ENCODE measurements at regions of chr16 and their contacts with region 1.

Region 1: GRCh38 chr16:8674413-8675022 is at the start of gene ABAT:
- DNase-seq: peak; percentile 86

Region 2: GRCh38 chr16:8797364-8798173 is 123.1 kb after region 1 on chr16 and contains the starts of genes PMM2 and TMEM186:
- in situ Hi-C with region 1: loop called (anchors 25 kb)
- DNase-seq: peak; percentile 97

Region 3: DNA sequence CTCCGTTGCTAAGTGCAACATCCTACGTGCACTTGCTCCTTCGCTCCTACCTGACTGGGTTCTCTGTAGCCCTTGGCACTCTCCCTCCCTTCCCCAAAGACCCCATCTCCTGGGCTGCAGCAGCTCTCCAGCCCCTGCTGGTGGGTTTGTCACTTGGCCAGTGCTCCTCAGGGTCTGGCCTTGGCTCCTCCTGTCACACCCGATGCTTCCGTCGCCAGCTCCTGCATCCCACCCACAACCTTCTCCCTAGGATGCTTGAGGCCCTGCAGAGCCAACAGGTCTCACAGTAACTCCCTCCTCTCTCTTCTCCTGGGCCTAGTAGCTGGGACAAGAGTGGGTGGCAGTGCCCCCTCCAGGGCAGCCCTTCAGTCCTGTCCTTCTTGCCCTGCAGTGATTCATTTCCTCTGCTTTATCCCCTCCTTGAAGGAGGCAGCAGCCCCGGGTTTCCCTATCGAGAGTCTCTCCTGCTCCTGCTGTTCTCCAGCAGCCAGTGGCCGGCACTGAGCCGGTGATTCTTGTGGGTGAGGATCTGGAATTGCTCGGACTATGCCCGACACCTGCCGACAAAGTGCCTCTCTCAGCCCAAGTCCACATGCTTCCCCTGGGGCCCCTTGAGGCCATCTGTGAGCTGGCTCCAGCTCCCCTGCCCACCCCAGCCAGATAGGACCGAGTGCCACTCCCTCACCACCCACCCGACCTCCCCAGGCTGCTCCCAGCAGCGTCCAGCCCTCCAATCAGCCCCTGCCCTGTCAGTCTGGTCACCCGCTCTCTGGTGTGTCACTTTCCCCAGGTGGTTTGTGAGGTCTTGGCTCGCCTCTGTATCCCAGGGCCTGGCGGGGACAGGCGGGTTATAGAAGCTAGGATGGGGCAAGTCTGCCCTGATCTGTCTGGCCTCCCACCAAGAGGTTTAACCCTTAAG is 211.4 kb after region 1 on chr16:
- in situ Hi-C with region 1: loop called (anchors 25 kb)
- DNase-seq: no peak

Region 4: GRCh38 chr16:9134739-9135138 is 460.2 kb after region 1 on chr16:
- in situ Hi-C with region 1: loop called (anchors 25 kb)
- DNase-seq: peak; percentile 79

Measured in KBM-7 (cell line).